Activated CD4-positive, alpha-beta memory T cell treated with anti-CD3 and anti-CD28 coated beads, Interleukin-2, amount 10 ng/mL, durations not matched to agents 7 days and 5 days (primary cell): ENCODE measurements at regions of chr12 and their contacts with region 1.

Region 1: GRCh38 chr12:12008931-12009611 is 61.7 kb upstream of the BCL2L14 start:
- DNase-seq: peak; percentile 69
- H3K4me3 Mint-ChIP-seq: peak overlapping the region; percentile 64
- H3K27ac Mint-ChIP-seq: peak overlapping the region; percentile 89
- H3K4me1 Mint-ChIP-seq: peaks cover 77% of the 10 kb centered on the region
- H3K27me3 Mint-ChIP-seq: peaks cover 18% of the 10 kb centered on the region

Region 2: GRCh38 chr12:11581179-11581755 is 427.8 kb before region 1 on chr12:
- CTCF ChIA-PET with region 1: interaction called, 11 read pairs
- POLR2A ChIA-PET with region 1: interaction called, 3 read pairs
- DNase-seq: peak; percentile 66
- H3K4me3 Mint-ChIP-seq: no peak overlapping the region
- H3K27ac Mint-ChIP-seq: no peak overlapping the region
- H3K4me1 Mint-ChIP-seq: peaks cover 16% of the 10 kb centered on the region
- H3K27me3 Mint-ChIP-seq: peaks cover 8% of the 10 kb centered on the region

Region 3: DNA sequence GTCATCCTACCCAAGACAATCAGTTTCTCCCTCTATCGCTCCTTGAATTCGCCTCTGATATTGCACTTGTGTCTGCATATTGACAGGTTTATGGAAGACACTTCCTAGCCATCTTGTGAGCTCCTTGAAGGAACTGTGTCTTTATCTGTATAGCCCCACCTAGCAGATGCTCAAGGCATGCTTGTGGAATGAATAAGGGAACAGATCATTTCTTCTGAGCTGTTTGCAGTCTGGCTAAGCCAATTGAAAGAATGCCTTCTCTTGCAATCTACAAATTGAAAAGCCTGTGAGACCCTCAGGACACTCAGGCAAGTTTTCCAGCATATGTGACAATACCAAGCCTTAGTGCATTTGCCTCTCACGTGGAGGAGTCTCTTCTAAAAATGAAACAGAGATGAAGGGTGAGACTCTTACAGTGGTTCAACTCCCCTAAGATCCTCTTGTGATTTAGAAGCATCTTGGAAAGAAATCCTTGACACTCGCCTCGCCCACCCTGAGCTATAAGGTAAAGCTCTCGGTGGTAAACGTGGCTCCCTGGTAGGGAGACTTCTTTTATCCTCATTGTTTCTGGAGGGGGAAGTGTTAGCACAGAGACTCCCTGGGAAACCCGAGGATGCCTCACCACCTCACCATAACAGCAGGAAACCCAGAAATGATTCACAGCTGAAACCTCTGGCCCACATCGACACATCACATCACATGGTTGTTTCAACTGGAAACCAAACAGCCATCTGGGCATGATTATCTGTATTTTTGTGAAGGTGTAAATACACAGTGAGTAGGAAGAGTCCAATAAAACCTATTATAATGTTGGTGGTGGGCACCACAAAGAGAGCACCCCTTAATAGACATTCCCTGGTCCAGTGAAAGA is 50.6 kb before region 1 on chr12:
- CTCF ChIA-PET with region 1: interaction called, 11 read pairs
- POLR2A ChIA-PET with region 1: interaction called, 34 read pairs
- DNase-seq: peak; percentile 74
- H3K4me3 Mint-ChIP-seq: peak overlapping the region; percentile 36
- H3K27ac Mint-ChIP-seq: peak overlapping the region; percentile 82
- H3K4me1 Mint-ChIP-seq: peaks cover 56% of the 10 kb centered on the region
- H3K27me3 Mint-ChIP-seq: no peaks in the 10 kb centered on the region

Region 4: DNA sequence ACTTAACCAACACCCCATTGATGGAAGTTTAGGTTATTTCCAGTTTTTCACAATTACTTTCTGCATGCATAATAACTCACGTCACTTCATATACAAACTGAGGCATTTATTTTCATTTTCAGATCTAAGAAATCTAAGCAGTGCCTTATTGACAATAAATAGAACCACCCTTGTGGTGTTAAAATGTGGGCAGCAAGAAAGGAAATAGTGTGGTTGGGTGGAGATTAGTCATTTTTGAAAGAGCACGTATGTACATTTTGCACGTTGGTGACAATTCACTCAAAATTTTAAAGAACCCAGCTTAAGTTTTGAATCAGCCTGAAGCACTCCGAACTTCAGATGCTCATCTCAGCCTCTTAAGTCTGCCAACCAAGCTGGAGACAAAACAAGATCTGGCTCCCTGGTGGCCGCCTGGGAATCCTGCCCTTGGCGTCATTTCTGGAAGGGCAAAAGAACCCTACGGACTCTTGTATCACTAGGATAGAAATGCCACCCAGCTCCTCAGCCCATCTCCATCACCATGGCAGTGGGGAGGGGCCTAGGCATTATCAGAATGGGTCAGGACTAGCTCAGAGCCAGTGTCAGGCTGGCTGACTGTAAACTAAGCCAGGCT is 27.8 kb before region 1 on chr12:
- CTCF ChIA-PET with region 1: interaction called, 39 read pairs
- POLR2A ChIA-PET with region 1: interaction called, 113 read pairs
- DNase-seq: peak; percentile 66
- H3K4me3 Mint-ChIP-seq: peak overlapping the region; percentile 34
- H3K27ac Mint-ChIP-seq: peak overlapping the region; percentile 98
- H3K4me1 Mint-ChIP-seq: peaks cover 61% of the 10 kb centered on the region
- H3K27me3 Mint-ChIP-seq: peaks cover 2% of the 10 kb centered on the region

Region 5: GRCh38 chr12:11998944-11999315 is 10.1 kb before region 1 on chr12:
- CTCF ChIA-PET with region 1: interaction called, 22 read pairs
- POLR2A ChIA-PET with region 1: interaction called, 23 read pairs
- DNase-seq: no peak
- H3K4me3 Mint-ChIP-seq: no peak overlapping the region
- H3K27ac Mint-ChIP-seq: peak overlapping the region; percentile 78
- H3K4me1 Mint-ChIP-seq: peaks cover 31% of the 10 kb centered on the region
- H3K27me3 Mint-ChIP-seq: peaks cover 2% of the 10 kb centered on the region

Region 6: GRCh38 chr12:12024911-12025682 is 16.0 kb after region 1 on chr12:
- CTCF ChIA-PET with region 1: interaction called, 7 read pairs
- POLR2A ChIA-PET with region 1: interaction called, 19 read pairs
- DNase-seq: peak; percentile 67
- H3K4me3 Mint-ChIP-seq: peak overlapping the region; percentile 28
- H3K27ac Mint-ChIP-seq: peak overlapping the region; percentile 74
- H3K4me1 Mint-ChIP-seq: peaks cover 40% of the 10 kb centered on the region
- H3K27me3 Mint-ChIP-seq: no peaks in the 10 kb centered on the region

Region 7: GRCh38 chr12:12032851-12033588 is 23.9 kb after region 1 on chr12:
- CTCF ChIA-PET with region 1: interaction called, 43 read pairs
- POLR2A ChIA-PET with region 1: interaction called, 28 read pairs
- DNase-seq: peak; percentile 77
- H3K4me3 Mint-ChIP-seq: peak overlapping the region; percentile 62
- H3K27ac Mint-ChIP-seq: peak overlapping the region; percentile 69
- H3K4me1 Mint-ChIP-seq: peaks cover 25% of the 10 kb centered on the region
- H3K27me3 Mint-ChIP-seq: no peaks in the 10 kb centered on the region